CD4-positive, alpha-beta memory T cell (primary cell): ENCODE measurements at regions of chr1 and their contacts with region 1.

Region 1: GRCh38 chr1:45303582-45304310 is 22.9 kb upstream of the HPDL start:
- DNase-seq: peak; percentile 94 to 97 (median 95)
- H3K4me3 ChIP-seq: peak overlapping the region; percentile 42 to 86
- H3K4me3 Mint-ChIP-seq: peak overlapping the region; percentile 87 to 94 (median 92)
- H3K27ac ChIP-seq: peak overlapping the region; percentile 85
- H3K27ac Mint-ChIP-seq: peak overlapping the region; percentile 93 to 98 (median 96)
- H3K4me1 ChIP-seq: peaks cover 11% of the 10 kb centered on the region
- H3K4me1 Mint-ChIP-seq: peaks cover 11 to 24% (median 18%) of the 10 kb centered on the region in 4 donors
- H3K27me3 ChIP-seq: no peaks in the 10 kb centered on the region
- H3K27me3 Mint-ChIP-seq: no peaks in the 10 kb centered on the region

Region 2: DNA sequence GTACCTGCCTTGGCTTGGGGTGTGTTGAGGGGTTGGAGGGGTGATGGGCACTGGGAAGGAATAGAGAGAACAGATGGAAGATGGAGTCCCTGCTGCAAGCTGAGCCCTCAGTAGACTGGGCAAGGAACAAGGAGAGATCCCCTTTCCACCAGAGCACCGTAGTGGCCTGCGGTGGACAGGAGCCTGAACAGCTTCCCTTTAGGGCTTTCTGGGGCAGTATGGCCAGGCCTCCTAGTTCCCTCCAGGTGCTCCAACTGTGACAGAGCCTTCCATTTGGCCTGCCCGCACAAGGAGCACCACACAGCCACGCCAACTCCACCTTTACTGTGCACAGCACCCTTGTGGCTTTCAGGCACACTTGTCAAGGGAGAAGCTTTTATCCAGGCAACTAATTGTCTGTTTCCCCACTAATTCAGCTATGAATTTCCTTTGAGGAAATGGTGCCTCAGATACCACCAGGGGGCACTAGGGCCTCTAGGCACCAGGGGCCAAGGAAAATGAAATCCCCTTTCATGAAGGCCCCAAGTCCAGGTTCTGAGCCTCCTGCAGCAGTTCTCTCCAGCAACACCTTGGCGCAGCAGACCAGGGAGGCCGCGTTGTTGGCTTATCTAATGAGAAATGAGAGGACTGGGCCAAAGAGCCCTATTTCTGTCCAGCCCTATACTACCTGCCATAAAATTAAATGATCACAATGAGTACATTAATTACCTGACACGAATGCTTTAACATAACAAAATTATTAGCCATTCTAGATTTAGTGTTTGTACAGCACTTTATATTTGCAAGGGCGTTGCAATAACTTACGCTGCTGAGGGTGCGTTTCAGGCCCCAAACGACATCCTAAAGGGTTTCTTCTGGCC is 925.6 kb before region 1 on chr1:
- CTCF ChIA-PET with region 1: no interaction called
- POLR2A ChIA-PET with region 1: no interaction called
- intact Hi-C with region 1: no loop called
- DNase-seq: peak; percentile 17 to 44 (median 22)
- H3K4me3 ChIP-seq: no peak overlapping the region
- H3K4me3 Mint-ChIP-seq: no peak overlapping the region
- H3K27ac ChIP-seq: no peak overlapping the region
- H3K27ac Mint-ChIP-seq: no peak overlapping the region
- H3K4me1 ChIP-seq: no peaks in the 10 kb centered on the region
- H3K4me1 Mint-ChIP-seq: no peaks in the 10 kb centered on the region
- H3K27me3 ChIP-seq: no peaks in the 10 kb centered on the region
- H3K27me3 Mint-ChIP-seq: peaks cover 0 to 7% of the 10 kb centered on the region in 2 donors

Region 3: DNA sequence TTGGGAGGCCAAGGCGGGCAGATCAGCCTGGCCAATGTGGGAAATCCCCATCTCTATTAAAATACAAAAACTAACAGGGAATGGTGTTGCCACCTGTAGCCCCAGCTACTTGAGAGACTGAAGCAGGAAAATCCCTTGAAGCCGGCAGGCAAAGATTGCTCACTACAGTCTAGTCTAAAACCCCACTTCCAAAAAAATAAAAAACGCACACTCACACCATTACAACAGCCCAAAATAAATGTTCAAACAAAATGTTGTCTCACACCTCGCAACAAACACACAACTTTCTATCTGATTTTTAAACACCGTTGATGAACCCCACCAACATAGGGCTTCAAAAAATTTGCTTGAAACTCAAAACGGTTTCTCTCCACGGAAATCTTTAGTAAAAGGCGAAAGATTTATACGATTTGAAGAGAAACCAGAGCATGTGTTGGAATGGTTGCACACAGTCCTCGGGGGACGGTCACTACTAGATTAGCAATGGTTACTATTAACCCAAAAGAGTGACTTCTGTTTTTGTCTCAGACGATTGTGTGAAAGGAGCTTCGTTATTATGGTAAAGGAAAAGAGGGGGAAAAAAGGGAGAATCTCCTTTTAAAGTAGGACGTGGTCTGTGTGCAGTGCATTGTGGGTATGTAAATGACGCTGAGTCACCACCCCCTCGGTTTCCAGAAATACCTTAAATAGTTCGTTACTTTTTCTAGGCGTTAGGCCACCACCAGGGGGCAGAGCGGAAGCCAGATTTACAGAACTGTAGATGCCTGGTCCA is 572.8 kb before region 1 on chr1 and contains the start of gene RNU5D-1:
- CTCF ChIA-PET with region 1: interaction called, 6 read pairs
- POLR2A ChIA-PET with region 1: interaction called, 28 read pairs
- intact Hi-C with region 1: loop called (anchors 1 kb)
- DNase-seq: peak; percentile 90 to 94 (median 91)
- H3K4me3 ChIP-seq: peak within 1 kb of the TSS; percentile 31 to 39
- H3K4me3 Mint-ChIP-seq: peak within 1 kb of the TSS; percentile 54 to 93 (median 84)
- H3K27ac ChIP-seq: peak within 1 kb of the TSS; percentile 96
- H3K27ac Mint-ChIP-seq: peak within 1 kb of the TSS; percentile 97 to 100 (median 99)
- H3K4me1 ChIP-seq: peaks cover 22% of the 10 kb centered on the region
- H3K4me1 Mint-ChIP-seq: peaks cover 18 to 38% (median 24%) of the 10 kb centered on the region in 4 donors
- H3K27me3 ChIP-seq: no peaks in the 10 kb centered on the region
- H3K27me3 Mint-ChIP-seq: no peaks in the 10 kb centered on the region
- total RNA-seq, gene RNU5D-1: not detected

Region 4: DNA sequence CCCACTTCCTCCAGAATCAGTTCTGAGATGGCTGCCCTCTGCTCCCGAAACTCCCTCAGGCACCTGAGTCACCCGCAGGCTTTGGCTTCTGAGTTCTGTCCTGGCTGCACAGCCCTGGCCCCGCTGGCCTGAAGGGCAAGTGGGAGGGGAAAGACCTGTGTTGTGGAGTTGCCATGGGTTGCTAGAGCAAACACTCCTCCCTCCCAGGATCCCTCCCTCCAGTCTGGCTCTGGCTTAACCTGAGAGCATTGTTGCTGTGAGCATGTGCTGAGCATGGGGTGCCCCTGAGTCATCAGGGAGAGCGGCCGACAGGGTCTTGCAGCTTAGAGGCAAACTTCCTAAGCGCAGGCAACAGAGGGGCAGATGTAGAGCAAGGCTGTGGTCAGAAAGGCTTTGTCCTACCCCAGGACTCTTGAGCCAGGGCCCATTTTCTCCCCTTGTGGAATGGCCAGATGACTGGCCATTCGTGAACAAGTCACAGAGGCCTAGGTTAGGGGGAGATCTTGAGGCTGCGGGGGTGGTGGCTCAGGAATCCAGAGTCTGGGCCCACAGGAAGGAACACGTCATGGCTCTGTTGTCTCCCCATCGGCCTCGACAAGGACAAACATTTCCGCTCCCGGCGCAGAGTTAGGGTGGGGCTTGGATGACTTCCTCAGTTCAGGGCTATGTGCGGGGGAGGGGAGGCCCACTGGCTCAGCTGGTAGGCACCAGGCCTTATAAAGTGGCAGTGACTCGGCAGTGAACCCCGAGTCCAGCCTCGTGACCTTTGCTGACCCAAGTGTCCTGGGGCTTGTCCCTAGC is 496.3 kb before region 1 on chr1 and contains the start of gene DYNLT4:
- CTCF ChIA-PET with region 1: no interaction called
- POLR2A ChIA-PET with region 1: interaction called, 16 read pairs
- intact Hi-C with region 1: no loop called
- DNase-seq: peak; percentile 91 to 98 (median 91)
- H3K4me3 ChIP-seq: peak within 1 kb of the TSS; percentile 41 to 57
- H3K4me3 Mint-ChIP-seq: peak within 1 kb of the TSS; percentile 74 to 87 (median 80)
- H3K27ac ChIP-seq: peak within 1 kb of the TSS; percentile 98
- H3K27ac Mint-ChIP-seq: peak within 1 kb of the TSS; percentile 98 to 100 (median 99)
- H3K4me1 ChIP-seq: peaks cover 91% of the 10 kb centered on the region
- H3K4me1 Mint-ChIP-seq: peaks cover 57 to 94% (median 73%) of the 10 kb centered on the region in 4 donors
- H3K27me3 ChIP-seq: no peaks in the 10 kb centered on the region
- H3K27me3 Mint-ChIP-seq: no peaks in the 10 kb centered on the region
- total RNA-seq, gene DYNLT4: 0.47 TPM in 1 of 2 experiments, not detected in the other

Region 5: DNA sequence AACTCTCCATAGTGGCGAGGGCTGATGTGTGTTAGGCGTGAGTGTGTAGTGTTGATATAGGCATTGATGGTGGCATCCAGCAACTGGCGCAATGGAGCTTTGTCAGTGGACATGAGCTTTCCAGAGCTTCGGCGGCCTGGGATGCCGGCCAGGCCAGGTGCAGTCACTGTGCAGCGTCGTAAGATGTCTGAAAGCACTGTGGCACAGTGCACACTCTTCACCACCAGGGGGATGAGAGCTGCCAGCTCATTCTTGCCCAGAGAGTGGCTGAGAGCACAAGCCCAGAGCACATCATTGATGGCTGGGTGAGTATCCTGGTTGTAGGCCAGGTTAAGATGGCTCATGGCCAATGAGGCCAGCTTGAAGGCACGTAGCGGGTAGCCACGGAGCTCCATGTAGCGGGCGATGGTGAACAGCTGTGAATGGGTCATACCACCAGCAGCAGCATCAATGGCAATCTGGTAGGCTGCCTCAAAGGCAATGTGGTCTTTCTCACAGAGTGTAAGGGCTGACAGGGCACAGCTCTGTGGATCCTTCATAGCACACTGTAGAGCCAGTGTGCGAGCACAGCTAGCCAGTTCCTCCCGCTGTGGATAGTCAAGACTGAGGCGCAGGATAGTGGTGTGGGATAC is 285.0 kb before region 1 on chr1:
- CTCF ChIA-PET with region 1: interaction called, 388 read pairs
- POLR2A ChIA-PET with region 1: interaction called, 158 read pairs
- intact Hi-C with region 1: loop called (anchors 1 kb)
- DNase-seq: peak; percentile 49 to 66 (median 56)
- H3K4me3 ChIP-seq: no peak overlapping the region
- H3K4me3 Mint-ChIP-seq: no peak overlapping the region
- H3K27ac ChIP-seq: no peak overlapping the region
- H3K27ac Mint-ChIP-seq: peak overlapping the region; percentile 4 to 80 (median 70)
- H3K4me1 ChIP-seq: no peaks in the 10 kb centered on the region
- H3K4me1 Mint-ChIP-seq: peaks cover 9 to 18% (median 10%) of the 10 kb centered on the region in 4 donors
- H3K27me3 ChIP-seq: no peaks in the 10 kb centered on the region
- H3K27me3 Mint-ChIP-seq: no peaks in the 10 kb centered on the region

Region 6: GRCh38 chr1:45490626-45491486 is 187.1 kb after region 1 on chr1 and contains the start of gene TESK2:
- CTCF ChIA-PET with region 1: interaction called, 60 read pairs
- POLR2A ChIA-PET with region 1: interaction called, 22 read pairs
- intact Hi-C with region 1: loop called (anchors 1 kb)
- DNase-seq: peak; percentile 97 to 100 (median 99)
- H3K4me3 ChIP-seq: peak within 1 kb of the TSS; percentile 71 to 79
- H3K4me3 Mint-ChIP-seq: no peak within 1 kb of the TSS
- H3K27ac ChIP-seq: peak within 1 kb of the TSS; percentile 68
- H3K27ac Mint-ChIP-seq: no peak within 1 kb of the TSS
- H3K4me1 ChIP-seq: peaks cover 22% of the 10 kb centered on the region
- H3K4me1 Mint-ChIP-seq: peaks cover 5 to 13% (median 10%) of the 10 kb centered on the region in 4 donors
- H3K27me3 ChIP-seq: no peaks in the 10 kb centered on the region
- H3K27me3 Mint-ChIP-seq: no peaks in the 10 kb centered on the region
- total RNA-seq, gene TESK2: 7.5 to 7.7 TPM

Region 7: GRCh38 chr1:46247436-46248121 is 943.8 kb after region 1 on chr1 and contains the start of gene RAD54L:
- CTCF ChIA-PET with region 1: no interaction called
- POLR2A ChIA-PET with region 1: no interaction called
- intact Hi-C with region 1: loop called (anchors 5 kb)
- DNase-seq: peak; percentile 94 to 98 (median 96)
- H3K4me3 ChIP-seq: peak within 1 kb of the TSS; percentile 85 to 91
- H3K4me3 Mint-ChIP-seq: peak within 1 kb of the TSS; percentile 89 to 95 (median 92)
- H3K27ac ChIP-seq: peak within 1 kb of the TSS; percentile 53
- H3K27ac Mint-ChIP-seq: peak within 1 kb of the TSS; percentile 61 to 90 (median 87)
- H3K4me1 ChIP-seq: peaks cover 13% of the 10 kb centered on the region
- H3K4me1 Mint-ChIP-seq: peaks cover 11 to 16% (median 14%) of the 10 kb centered on the region in 4 donors
- H3K27me3 ChIP-seq: no peaks in the 10 kb centered on the region
- H3K27me3 Mint-ChIP-seq: no peaks in the 10 kb centered on the region
- total RNA-seq, gene RAD54L: 1.0 to 1.1 TPM